Transverse colon (tissue), 4 donors: ENCODE measurements at regions of chr4 and their contacts with region 1.

Region 1: DNA sequence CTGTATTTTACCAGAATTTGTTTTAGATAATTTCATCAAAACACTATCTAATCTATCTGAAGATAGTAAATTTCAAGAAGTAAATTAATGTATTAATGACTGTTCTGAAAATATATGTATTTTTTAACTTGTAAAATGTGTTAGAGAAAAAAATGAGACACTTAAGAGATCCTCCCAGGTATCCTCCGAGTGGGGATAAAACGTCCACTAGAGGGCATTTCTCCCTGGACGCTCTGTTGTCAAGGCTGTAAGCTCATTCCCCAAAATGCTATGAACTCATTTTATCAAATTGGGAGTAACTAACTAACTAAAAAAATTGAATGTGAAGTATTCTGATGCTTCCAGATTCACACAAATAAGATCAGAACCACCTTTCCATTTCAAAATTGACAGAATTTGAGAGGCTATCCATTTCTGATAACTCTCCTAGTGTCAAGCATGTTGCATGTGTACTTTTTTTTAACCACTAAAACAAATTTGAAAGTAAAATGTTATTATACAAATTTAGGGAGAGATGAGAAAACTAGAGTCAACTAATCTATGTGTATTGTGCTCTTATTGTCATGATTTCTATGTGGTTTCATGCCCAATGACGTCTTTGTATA is 337.3 kb upstream of the HS3ST1 start:
- DNase-seq: peak; percentile 14
- H3K4me3 ChIP-seq: no peak overlapping the region
- H3K27ac ChIP-seq: no peak overlapping the region
- H3K4me1 ChIP-seq: no peaks in the 10 kb centered on the region
- H3K27me3 ChIP-seq: no peaks in the 10 kb centered on the region
- CTCF ChIP-seq: peak; percentile 55 to 77 (median 67)
- EP300 ChIP-seq: no peak
- POLR2A ChIP-seq: no peak

Region 2: GRCh38 chr4:11650801-11651596 is 115.0 kb before region 1 on chr4:
- in situ Hi-C with region 1: loop called in 1 of 4 experiments (anchors 25 kb)
- intact Hi-C with region 1: no loop called
- DNase-seq: no peak
- H3K4me3 ChIP-seq: no peak overlapping the region
- H3K27ac ChIP-seq: no peak overlapping the region
- H3K4me1 ChIP-seq: no peaks in the 10 kb centered on the region
- H3K27me3 ChIP-seq: no peaks in the 10 kb centered on the region
- CTCF ChIP-seq: no peak
- EP300 ChIP-seq: no peak
- POLR2A ChIP-seq: no peak